Common myeloid progenitor, CD34-positive (primary cell): ENCODE measurements at regions of chr12 and their contacts with region 1.

Region 1: DNA sequence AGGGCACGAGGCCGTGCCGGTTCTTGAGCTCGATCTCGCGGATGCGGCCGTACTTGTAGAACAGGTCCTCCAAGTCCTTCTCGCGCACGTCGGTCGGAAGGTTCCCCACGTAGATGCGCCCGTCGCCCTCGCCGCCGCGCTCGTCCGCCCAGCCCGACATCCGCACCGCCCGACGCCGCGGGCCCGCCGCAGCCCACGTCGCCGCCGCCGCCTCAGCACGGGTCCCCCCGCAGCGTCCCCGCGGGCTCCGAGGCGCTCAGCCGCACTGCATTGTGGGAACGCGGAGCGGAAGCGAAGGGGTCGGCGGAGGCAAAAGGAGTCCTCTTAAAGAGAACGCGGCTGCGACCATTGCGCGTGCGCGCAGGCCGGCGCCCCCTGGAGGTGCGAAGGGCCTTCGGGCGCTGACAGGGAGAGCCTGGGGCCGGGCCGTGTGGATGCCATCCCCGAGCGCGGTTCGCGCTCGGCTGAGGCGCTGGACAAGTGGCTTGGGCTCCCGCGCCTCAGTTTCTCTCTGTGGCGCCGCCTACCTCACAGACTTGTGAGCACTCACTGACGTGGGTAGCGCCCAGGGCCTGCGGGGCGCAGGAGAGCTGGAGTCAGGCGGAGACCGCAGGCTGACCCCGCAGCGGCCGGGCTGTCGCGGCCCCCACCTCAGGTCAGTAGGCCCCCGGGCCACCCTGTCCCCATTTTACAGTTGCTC is at the start of gene SRSF9:
- DNase-seq: peak; percentile 98 to 99 (median 98)
- H3K4me3 ChIP-seq: peak within 1 kb of the TSS; percentile 85 to 97 (median 93)
- H3K27ac ChIP-seq: peak within 1 kb of the TSS; percentile 89 to 95
- H3K4me1 ChIP-seq: peaks cover 7 to 51% (median 30%) of the 10 kb centered on the region in 4 experiments
- H3K27me3 ChIP-seq: no peaks in the 10 kb centered on the region

Region 2: GRCh38 chr12:120437754-120438494 is 31.7 kb before region 1 on chr12 and contains the start of gene COX6A1:
- CTCF ChIA-PET with region 1: interaction called, 545 read pairs
- POLR2A ChIA-PET with region 1: interaction called, 4 read pairs
- DNase-seq: peak; percentile 99
- H3K4me3 ChIP-seq: peak within 1 kb of the TSS; percentile 77 to 93 (median 86)
- H3K27ac ChIP-seq: peak within 1 kb of the TSS; percentile 58 to 83
- H3K4me1 ChIP-seq: peaks cover 8 to 23% (median 16%) of the 10 kb centered on the region in 4 experiments
- H3K27me3 ChIP-seq: no peaks in the 10 kb centered on the region

Region 3: GRCh38 chr12:120481022-120481767 is 11.6 kb after region 1 on chr12:
- CTCF ChIA-PET with region 1: interaction called, 57 read pairs
- POLR2A ChIA-PET with region 1: no interaction called
- DNase-seq: peak in 2 of 3 donors; percentile 34 to 54
- H3K4me3 ChIP-seq: no peak overlapping the region
- H3K27ac ChIP-seq: no peak overlapping the region
- H3K4me1 ChIP-seq: peaks cover 0 to 9% (median 4%) of the 10 kb centered on the region in 4 experiments
- H3K27me3 ChIP-seq: no peaks in the 10 kb centered on the region

Region 4: GRCh38 chr12:120495723-120496412 is 26.3 kb after region 1 on chr12 and contains the start of gene DYNLL1:
- CTCF ChIA-PET with region 1: interaction called, 10 read pairs
- POLR2A ChIA-PET with region 1: interaction called, 4 read pairs
- DNase-seq: peak; percentile 96 to 98 (median 97)
- H3K4me3 ChIP-seq: peak within 1 kb of the TSS; percentile 85 to 99 (median 93)
- H3K27ac ChIP-seq: peak within 1 kb of the TSS; percentile 80 to 92
- H3K4me1 ChIP-seq: peaks cover 9 to 27% (median 19%) of the 10 kb centered on the region in 4 experiments
- H3K27me3 ChIP-seq: no peaks in the 10 kb centered on the region

Region 5: DNA sequence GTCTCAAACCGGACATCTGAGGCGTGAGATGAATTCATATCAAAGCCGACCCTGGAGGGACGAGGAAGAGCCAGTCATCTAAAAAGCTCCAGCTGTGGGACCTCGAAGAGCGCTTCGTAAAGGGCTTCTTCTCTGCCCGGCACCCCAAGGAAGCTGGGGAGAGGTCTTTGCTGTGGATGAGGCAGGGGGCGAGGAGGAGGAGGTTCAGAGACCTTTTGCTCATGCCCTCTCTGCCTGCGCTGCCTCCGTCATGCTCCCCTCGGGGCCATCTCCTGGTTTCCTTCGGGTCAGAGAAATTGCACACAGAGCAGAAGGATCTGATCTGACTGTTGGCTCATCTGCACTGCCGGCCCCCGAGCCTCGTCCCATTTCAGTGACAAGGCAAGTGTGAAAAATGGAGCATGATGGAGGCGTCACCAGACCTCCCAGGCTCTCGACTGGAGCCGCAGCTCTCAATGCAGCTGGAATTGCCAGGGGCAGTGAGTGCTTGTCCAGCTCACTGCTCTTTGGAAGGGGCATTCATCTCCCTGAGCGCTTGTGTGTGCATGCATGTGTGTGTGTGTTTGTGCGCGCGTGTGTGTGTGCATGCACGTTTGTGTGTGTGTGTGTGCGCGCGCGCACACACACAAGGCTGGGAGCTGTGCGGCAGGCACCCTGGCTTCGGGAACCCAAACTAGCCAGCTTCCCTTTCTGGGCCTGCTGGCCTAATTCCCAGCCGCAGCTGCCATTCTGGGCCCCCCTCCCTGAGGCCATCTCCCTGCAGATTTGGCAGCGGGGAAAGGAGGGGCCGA is 180.0 kb after region 1 on chr12:
- CTCF ChIA-PET with region 1: no interaction called
- POLR2A ChIA-PET with region 1: no interaction called
- DNase-seq: peak in 2 of 3 donors; percentile 50 to 62
- H3K4me3 ChIP-seq: peak overlapping the region in 4 of 7 experiments; percentile 26 to 66 (median 62)
- H3K27ac ChIP-seq: no peak overlapping the region
- H3K4me1 ChIP-seq: peaks cover 0 to 17% (median 15%) of the 10 kb centered on the region in 4 experiments
- H3K27me3 ChIP-seq: peaks cover 0 to 34% (median 30%) of the 10 kb centered on the region in 5 experiments